HCT116 (cell line): ENCODE measurements at regions of chr15 and their contacts with region 1.

Region 1: DNA sequence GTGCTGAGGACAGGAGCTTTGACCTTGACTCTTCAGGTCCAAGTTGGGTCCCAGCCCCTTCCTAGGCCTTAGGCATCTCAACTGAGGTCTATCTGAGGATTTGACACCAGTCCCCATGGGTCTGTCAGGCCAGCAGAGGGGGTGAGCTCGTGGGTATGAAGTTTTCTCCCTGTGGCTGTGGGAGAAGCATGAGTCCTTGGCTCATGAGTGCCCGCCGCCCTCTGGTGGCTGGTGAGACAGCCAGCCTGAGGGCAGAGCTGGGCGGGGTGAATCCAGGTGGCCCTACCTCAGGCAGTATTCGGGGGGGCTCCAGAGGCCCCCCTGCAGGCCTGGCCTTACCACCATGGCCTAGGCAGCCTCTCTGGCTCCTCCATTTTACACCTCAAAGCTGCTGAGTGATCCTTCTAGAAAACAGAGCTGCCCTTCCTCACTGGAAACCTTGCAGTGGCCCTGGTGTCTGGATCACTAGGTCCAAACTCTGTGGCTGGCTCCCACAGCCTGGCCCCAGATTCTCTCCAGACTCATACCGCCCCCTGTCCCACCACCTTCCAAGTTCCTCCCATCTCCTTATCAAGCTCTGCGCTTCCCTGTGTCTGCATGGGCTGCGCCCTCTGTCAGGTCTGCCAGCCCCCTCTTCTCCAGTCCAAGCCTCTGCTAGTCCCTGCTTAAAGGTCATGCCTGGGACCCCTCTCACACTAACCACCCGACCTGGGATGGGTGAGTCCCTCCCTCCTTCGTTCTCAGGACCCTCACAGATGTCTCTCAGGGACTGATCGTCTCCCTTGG is 16.1 kb downstream of the SH2D7 start:
- DNase-seq: peak; percentile 79
- ATAC-seq: peak; percentile 97
- H3K4me3 ChIP-seq: no peak overlapping the region
- H3K27ac ChIP-seq: no peak overlapping the region
- H3K4me1 ChIP-seq: 0 out of 4 replicates have a peak, but pooled peaks cover 0 to 6% of the 10 kb centered on the region in 2 experiments
- H3K27me3 ChIP-seq: no peaks in the 10 kb centered on the region
- CTCF ChIP-seq: peak; percentile 89 to 98 (median 96)
- POLR2A ChIP-seq: no peak
- RAD21 ChIP-seq: peak; percentile 92

Region 2: GRCh38 chr15:77959432-77959879 is 149.0 kb before region 1 on chr15:
- CTCF ChIA-PET with region 1: interaction called, 43 read pairs
- POLR2A ChIA-PET with region 1: no interaction called
- RAD21 ChIA-PET with region 1: interaction called, 7 to 18 read pairs
- intact Hi-C with region 1: loop called (anchors 1 kb)
- DNase-seq: peak; percentile 63
- ATAC-seq: peak; percentile 100
- H3K4me3 ChIP-seq: peak overlapping the region; percentile 33 to 36
- H3K27ac ChIP-seq: no peak overlapping the region
- H3K4me1 ChIP-seq: peaks cover 0 to 11% of the 10 kb centered on the region in 2 experiments; a peak in 2 of 4 replicates
- H3K27me3 ChIP-seq: no peaks in the 10 kb centered on the region
- CTCF ChIP-seq: peak; percentile 92 to 94 (median 93)
- POLR2A ChIP-seq: no peak
- RAD21 ChIP-seq: peak; percentile 95

Region 3: DNA sequence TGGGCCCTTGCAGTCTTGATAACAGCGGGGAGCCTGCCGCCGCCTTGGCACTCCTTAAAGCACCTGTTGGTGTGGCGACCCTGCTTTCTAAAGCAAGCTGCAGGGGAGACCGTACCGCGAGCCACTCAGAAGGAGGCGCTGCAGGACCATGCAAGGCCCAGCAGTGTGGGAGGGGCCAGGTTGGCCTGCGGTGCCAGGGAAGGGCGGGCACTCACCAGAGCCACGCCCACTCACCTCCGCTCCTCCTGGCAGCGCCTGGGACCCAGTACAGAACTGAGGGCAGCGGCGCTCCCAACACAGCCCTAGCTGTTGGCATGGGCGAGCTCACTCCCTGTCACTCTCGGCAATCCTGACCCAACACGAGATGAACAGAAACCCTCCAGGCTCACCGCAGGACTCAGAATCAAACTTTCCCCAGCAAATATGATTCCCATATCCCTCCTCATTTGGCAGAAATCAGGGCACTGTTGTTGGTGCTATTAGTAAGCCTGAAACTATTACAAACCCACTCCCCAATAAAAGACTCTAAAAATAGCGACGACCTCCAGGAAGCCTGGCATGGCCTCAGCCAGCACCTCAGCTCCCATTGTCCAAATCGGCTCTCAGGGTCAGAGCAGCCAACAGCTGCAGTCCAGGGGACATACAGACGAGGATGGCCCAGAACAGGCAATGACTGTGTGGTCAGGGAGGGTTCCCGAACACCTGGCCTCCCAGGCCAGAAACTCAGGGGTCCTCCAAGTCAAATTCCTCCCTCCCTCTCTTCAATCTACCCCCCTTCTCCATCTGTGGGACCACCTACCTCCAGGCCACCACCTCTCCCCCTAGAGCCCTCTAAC is 108.2 kb before region 1 on chr15:
- CTCF ChIA-PET with region 1: interaction called, 70 read pairs
- POLR2A ChIA-PET with region 1: no interaction called
- RAD21 ChIA-PET with region 1: interaction called, 10 to 19 read pairs
- intact Hi-C with region 1: loop called (anchors 1 kb)
- DNase-seq: peak; percentile 81
- ATAC-seq: peak; percentile 100
- H3K4me3 ChIP-seq: no peak overlapping the region
- H3K27ac ChIP-seq: no peak overlapping the region
- H3K4me1 ChIP-seq: peaks cover 0 to 5% of the 10 kb centered on the region in 2 experiments; a peak in 1 of 4 replicates
- H3K27me3 ChIP-seq: no peaks in the 10 kb centered on the region
- CTCF ChIP-seq: peak; percentile 84 to 94 (median 85)
- POLR2A ChIP-seq: no peak
- RAD21 ChIP-seq: peak; percentile 97

Region 4: GRCh38 chr15:78177447-78177873 is 69.0 kb after region 1 on chr15:
- CTCF ChIA-PET with region 1: no interaction called
- POLR2A ChIA-PET with region 1: no interaction called
- RAD21 ChIA-PET with region 1: no interaction called
- intact Hi-C with region 1: loop called (anchors 1 kb)
- DNase-seq: peak; percentile 13
- ATAC-seq: peak; percentile 90
- H3K4me3 ChIP-seq: no peak overlapping the region
- H3K27ac ChIP-seq: no peak overlapping the region
- H3K4me1 ChIP-seq: no peaks in the 10 kb centered on the region
- H3K27me3 ChIP-seq: no peaks in the 10 kb centered on the region
- CTCF ChIP-seq: peak; percentile 87 to 89 (median 89)
- POLR2A ChIP-seq: no peak
- RAD21 ChIP-seq: peak; percentile 94

Region 5: GRCh38 chr15:78241007-78241406 is 132.5 kb after region 1 on chr15:
- CTCF ChIA-PET with region 1: interaction called, 34 read pairs
- POLR2A ChIA-PET with region 1: no interaction called
- RAD21 ChIA-PET with region 1: interaction called in 1 of 2 experiments, 7 read pairs
- intact Hi-C with region 1: loop called (anchors 1 kb)
- DNase-seq: peak; percentile 63
- ATAC-seq: peak; percentile 99
- H3K4me3 ChIP-seq: no peak overlapping the region
- H3K27ac ChIP-seq: no peak overlapping the region
- H3K4me1 ChIP-seq: peaks cover 2 to 4% of the 10 kb centered on the region in 2 experiments; a peak in 2 of 4 replicates
- H3K27me3 ChIP-seq: no peaks in the 10 kb centered on the region
- CTCF ChIP-seq: peak; percentile 90 to 93 (median 92)
- POLR2A ChIP-seq: no peak
- RAD21 ChIP-seq: peak; percentile 97

Region 6: DNA sequence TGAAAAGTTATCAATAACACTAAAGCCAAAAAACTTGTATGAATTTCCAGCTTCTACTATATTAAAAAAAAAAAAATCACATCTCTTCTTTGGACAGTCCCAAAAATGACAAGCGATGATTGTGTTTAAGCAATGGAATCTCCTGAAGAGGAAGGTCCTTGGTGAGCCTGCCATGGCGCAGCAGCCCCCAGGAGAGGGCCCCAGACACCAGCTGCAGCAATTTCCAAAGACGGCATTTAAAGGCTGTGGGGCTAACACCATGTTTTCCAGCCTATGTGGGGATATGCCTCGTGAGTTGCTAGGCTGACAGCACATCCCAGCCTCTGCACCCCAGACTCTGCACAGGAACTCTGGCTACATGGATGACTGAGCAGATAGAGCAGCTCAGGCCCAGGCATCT is 176.3 kb after region 1 on chr15:
- CTCF ChIA-PET with region 1: no interaction called
- POLR2A ChIA-PET with region 1: no interaction called
- RAD21 ChIA-PET with region 1: no interaction called
- intact Hi-C with region 1: no loop called
- DNase-seq: no peak
- ATAC-seq: no peak
- H3K4me3 ChIP-seq: no peak overlapping the region
- H3K27ac ChIP-seq: no peak overlapping the region
- H3K4me1 ChIP-seq: no peaks in the 10 kb centered on the region
- H3K27me3 ChIP-seq: no peaks in the 10 kb centered on the region
- CTCF ChIP-seq: peak in 1 of 3 experiments; percentile 28; a peak in 1 of 6 replicates
- POLR2A ChIP-seq: no peak
- RAD21 ChIP-seq: peak; percentile 35

Region 7: GRCh38 chr15:78449220-78449999 is 340.9 kb after region 1 on chr15:
- CTCF ChIA-PET with region 1: no interaction called
- POLR2A ChIA-PET with region 1: no interaction called
- RAD21 ChIA-PET with region 1: no interaction called
- intact Hi-C with region 1: no loop called
- DNase-seq: no peak
- ATAC-seq: no peak
- H3K4me3 ChIP-seq: no peak overlapping the region
- H3K27ac ChIP-seq: no peak overlapping the region
- H3K4me1 ChIP-seq: no peaks in the 10 kb centered on the region
- H3K27me3 ChIP-seq: no peaks in the 10 kb centered on the region
- CTCF ChIP-seq: no peak
- POLR2A ChIP-seq: no peak
- RAD21 ChIP-seq: no peak